Gastrocnemius medialis (tissue), 4 donors: ENCODE measurements at regions of chr10 and their contacts with region 1.

Region 1: DNA sequence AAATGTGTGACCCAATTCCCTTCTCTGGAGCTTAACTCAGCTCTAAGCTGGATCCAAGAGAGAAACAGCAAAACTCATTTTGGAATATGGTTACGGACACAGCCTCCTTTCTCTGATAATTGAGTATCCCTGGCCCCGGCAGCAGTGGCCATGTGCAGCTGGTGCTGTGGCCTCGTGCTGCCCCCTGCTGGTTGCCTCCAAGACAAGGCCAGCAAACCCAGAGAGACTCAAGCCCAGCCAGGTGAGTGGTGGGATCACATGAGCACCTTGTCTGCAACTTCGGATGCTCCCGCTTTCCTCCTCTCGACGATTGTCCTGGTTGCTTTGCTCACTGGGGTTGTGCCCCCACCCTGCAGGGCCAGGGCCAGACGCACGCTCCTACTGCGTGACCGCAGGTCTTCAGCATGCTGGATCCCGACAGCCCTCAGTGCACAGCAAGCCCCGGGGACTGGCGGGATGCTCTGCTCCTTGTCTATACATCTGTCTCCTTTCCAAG is 19.4 kb downstream of the SFTPD start:
- DNase-seq: peak; percentile 63
- ATAC-seq: peak; percentile 79 to 90
- H3K4me3 ChIP-seq: no peak overlapping the region
- H3K27ac ChIP-seq: no peak overlapping the region
- H3K4me1 ChIP-seq: peaks cover 0 to 3% of the 10 kb centered on the region in 2 donors
- H3K27me3 ChIP-seq: no peaks in the 10 kb centered on the region
- CTCF ChIP-seq: peak; percentile 78 to 96 (median 92)
- POLR2A ChIP-seq: no peak

Region 2: DNA sequence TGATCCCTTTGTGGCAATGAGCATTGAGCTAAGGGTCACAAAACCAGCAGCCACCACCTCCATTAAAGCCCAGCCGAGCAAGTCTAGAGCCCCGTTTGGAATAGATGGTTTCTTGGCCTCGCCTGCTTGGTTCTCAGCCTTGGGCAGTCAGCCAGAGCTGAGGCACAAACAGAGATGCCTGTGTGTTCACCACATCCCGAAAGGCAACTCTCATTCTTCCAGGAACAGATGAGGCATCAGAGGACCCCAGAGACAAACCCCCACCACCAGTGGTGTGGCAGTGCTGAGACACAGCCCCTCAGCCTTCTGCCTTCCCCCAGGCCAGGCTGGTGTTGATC is 1064.0 kb before region 1 on chr10:
- in situ Hi-C with region 1: no loop called
- intact Hi-C with region 1: no loop called
- DNase-seq: no peak
- ATAC-seq: no peak
- H3K4me3 ChIP-seq: no peak overlapping the region
- H3K27ac ChIP-seq: no peak overlapping the region
- H3K4me1 ChIP-seq: no peaks in the 10 kb centered on the region
- H3K27me3 ChIP-seq: no peaks in the 10 kb centered on the region
- CTCF ChIP-seq: no peak
- POLR2A ChIP-seq: no peak

Region 3: GRCh38 chr10:79562135-79562756 is 367.2 kb before region 1 on chr10:
- in situ Hi-C with region 1: loop called in 3 of 4 experiments (anchors 25 kb)
- intact Hi-C with region 1: loop called (anchors 5 kb)
- DNase-seq: peak in 1 of 2 donors; percentile 25
- ATAC-seq: peak in 1 of 2 donors; percentile 46
- H3K4me3 ChIP-seq: no peak overlapping the region
- H3K27ac ChIP-seq: no peak overlapping the region
- H3K4me1 ChIP-seq: no peaks in the 10 kb centered on the region
- H3K27me3 ChIP-seq: no peaks in the 10 kb centered on the region
- CTCF ChIP-seq: peak; percentile 34 to 68 (median 49)
- POLR2A ChIP-seq: no peak